GM12878 (cell line): ENCODE measurements at regions of chr17 and their contacts with region 1.

Region 1: GRCh38 chr17:19362277-19363113 is at the start of gene B9D1:
- DNase-seq: peak; percentile 73
- ATAC-seq: peak; percentile 95
- H3K4me3 ChIP-seq: peak within 1 kb of the TSS; percentile 85
- H3K27ac ChIP-seq: no peak within 1 kb of the TSS
- H3K4me1 ChIP-seq: peaks cover 7% of the 10 kb centered on the region
- H3K27me3 ChIP-seq: no peaks in the 10 kb centered on the region; a peak in 2 of 4 replicates
- CTCF ChIP-seq: peak; percentile 91 to 99 (median 92)
- EP300 ChIP-seq: no peak
- POLR2A ChIP-seq: peak; percentile 53
- RAD21 ChIP-seq: peak; percentile 93
- polyA plus RNA-seq, gene B9D1: 8.2 to 10.2 TPM

Region 2: DNA sequence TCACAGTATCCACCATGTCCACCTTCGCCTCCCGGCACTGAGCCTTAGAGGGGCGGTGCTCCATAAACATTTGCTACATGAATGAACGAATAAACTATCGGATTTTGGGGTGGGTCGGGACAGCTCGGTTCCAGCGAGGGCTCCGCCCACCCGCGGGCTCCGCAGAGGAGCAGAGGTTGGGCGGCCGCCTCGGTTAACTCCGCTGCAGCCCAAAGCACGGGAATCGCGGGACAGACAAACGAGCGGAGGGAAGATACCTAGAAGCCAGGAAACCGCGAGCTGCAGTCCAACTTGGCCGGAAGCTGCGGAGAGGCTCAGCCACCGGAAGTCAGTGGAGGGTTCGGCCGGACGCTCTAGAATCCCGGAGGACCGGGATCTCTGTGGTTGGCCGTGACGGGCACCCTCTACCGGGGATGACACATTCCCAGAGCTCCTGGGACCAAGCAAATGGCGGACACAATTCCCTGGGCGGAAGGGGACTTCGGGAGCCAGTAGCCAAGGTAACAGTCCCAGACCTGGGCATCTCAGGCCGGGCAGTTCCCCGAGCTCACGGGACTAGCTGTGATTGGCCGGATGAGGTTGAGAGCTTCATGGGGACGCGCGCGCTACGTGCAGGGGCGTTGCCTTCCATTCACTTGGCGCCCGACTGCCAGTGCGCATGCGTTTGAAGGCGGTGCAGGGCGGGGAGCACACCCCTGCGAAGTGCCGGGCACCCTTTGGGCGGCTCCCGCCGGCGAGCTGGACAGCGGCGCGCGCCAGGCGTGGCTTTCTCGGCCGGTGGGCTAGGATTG is 15.3 kb after region 1 on chr17:
- CTCF ChIA-PET with region 1: interaction called, 39 read pairs
- POLR2A ChIA-PET with region 1: interaction called, 5 read pairs
- RAD21 ChIA-PET with region 1: interaction called, 21 read pairs
- SMC1A ChIA-PET with region 1: interaction called, 10 read pairs
- in situ Hi-C with region 1: no loop called
- intact Hi-C with region 1: no loop called
- DNase-seq: peak; percentile 96
- ATAC-seq: peak; percentile 98
- H3K4me3 ChIP-seq: peak overlapping the region; percentile 84
- H3K27ac ChIP-seq: peak overlapping the region; percentile 93
- H3K4me1 ChIP-seq: no peaks in the 10 kb centered on the region
- H3K27me3 ChIP-seq: no peaks in the 10 kb centered on the region
- CTCF ChIP-seq: no peak
- EP300 ChIP-seq: peak in 1 of 2 experiments; percentile 20; a peak in 1 of 4 replicates
- POLR2A ChIP-seq: peak; percentile 88
- RAD21 ChIP-seq: no peak

Region 3: GRCh38 chr17:19447085-19447583 is 84.6 kb after region 1 on chr17:
- CTCF ChIA-PET with region 1: interaction called, 66 read pairs
- POLR2A ChIA-PET with region 1: interaction called, 3 read pairs
- RAD21 ChIA-PET with region 1: interaction called, 35 read pairs
- SMC1A ChIA-PET with region 1: interaction called, 7 read pairs
- in situ Hi-C with region 1: loop called (anchors 5 kb)
- intact Hi-C with region 1: loop called (anchors 1 kb)
- DNase-seq: peak; percentile 20
- ATAC-seq: peak; percentile 61
- H3K4me3 ChIP-seq: no peak overlapping the region
- H3K27ac ChIP-seq: no peak overlapping the region
- H3K4me1 ChIP-seq: no peaks in the 10 kb centered on the region
- H3K27me3 ChIP-seq: peaks cover 0 to 2% of the 10 kb centered on the region in 2 experiments; a peak in 2 of 4 replicates
- CTCF ChIP-seq: peak; percentile 82 to 86 (median 85)
- EP300 ChIP-seq: no peak
- POLR2A ChIP-seq: no peak
- RAD21 ChIP-seq: peak; percentile 76

Region 4: GRCh38 chr17:19513897-19514488 is 151.5 kb after region 1 on chr17:
- CTCF ChIA-PET with region 1: interaction called, 5 read pairs
- POLR2A ChIA-PET with region 1: no interaction called
- RAD21 ChIA-PET with region 1: no interaction called
- SMC1A ChIA-PET with region 1: no interaction called
- in situ Hi-C with region 1: no loop called
- intact Hi-C with region 1: loop called (anchors 5 kb)
- DNase-seq: no peak
- ATAC-seq: peak; percentile 86
- H3K4me3 ChIP-seq: no peak overlapping the region
- H3K27ac ChIP-seq: no peak overlapping the region
- H3K4me1 ChIP-seq: peaks cover 2% of the 10 kb centered on the region; the same call in 1 of the 2 replicates
- H3K27me3 ChIP-seq: no peaks in the 10 kb centered on the region
- CTCF ChIP-seq: peak; percentile 82 to 90 (median 88)
- EP300 ChIP-seq: no peak
- POLR2A ChIP-seq: no peak
- RAD21 ChIP-seq: peak; percentile 93

Region 5: GRCh38 chr17:19766422-19767270 is 404.2 kb after region 1 on chr17:
- CTCF ChIA-PET with region 1: interaction called, 4 read pairs
- POLR2A ChIA-PET with region 1: no interaction called
- RAD21 ChIA-PET with region 1: interaction called, 10 read pairs
- SMC1A ChIA-PET with region 1: interaction called, 8 read pairs
- in situ Hi-C with region 1: loop called (anchors 5 kb)
- intact Hi-C with region 1: loop called (anchors 2 kb)
- DNase-seq: no peak
- ATAC-seq: peak; percentile 98
- H3K4me3 ChIP-seq: no peak overlapping the region
- H3K27ac ChIP-seq: no peak overlapping the region
- H3K4me1 ChIP-seq: peaks cover 12% of the 10 kb centered on the region
- H3K27me3 ChIP-seq: no peaks in the 10 kb centered on the region
- CTCF ChIP-seq: peak; percentile 98 to 99 (median 99)
- EP300 ChIP-seq: no peak
- POLR2A ChIP-seq: no peak
- RAD21 ChIP-seq: peak; percentile 99